ENCODE measurements at regions of chr5 and their contacts with region 1.

Region 1: GRCh38 chr5:72307968-72308852 is 11.8 kb downstream of the MRPS27 start:
- DNase-seq: peak; percentile 91 to 97 (median 95)
- ATAC-seq: peak; percentile 98
- H3K4me3 ChIP-seq: peak overlapping the region; percentile 93
- H3K4me3 Mint-ChIP-seq: peak overlapping the region; percentile 78 to 94 (median 92)
- H3K27ac ChIP-seq: peak overlapping the region; percentile 95
- H3K27ac Mint-ChIP-seq: peak overlapping the region; percentile 84 to 97 (median 91)
- H3K4me1 ChIP-seq: peaks cover 3 to 12% of the 10 kb centered on the region in 2 donors
- H3K4me1 Mint-ChIP-seq: peaks cover 9 to 38% (median 29%) of the 10 kb centered on the region in 7 donors
- H3K27me3 ChIP-seq: no peaks in the 10 kb centered on the region
- H3K27me3 Mint-ChIP-seq: no peaks in the 10 kb centered on the region

Region 2: DNA sequence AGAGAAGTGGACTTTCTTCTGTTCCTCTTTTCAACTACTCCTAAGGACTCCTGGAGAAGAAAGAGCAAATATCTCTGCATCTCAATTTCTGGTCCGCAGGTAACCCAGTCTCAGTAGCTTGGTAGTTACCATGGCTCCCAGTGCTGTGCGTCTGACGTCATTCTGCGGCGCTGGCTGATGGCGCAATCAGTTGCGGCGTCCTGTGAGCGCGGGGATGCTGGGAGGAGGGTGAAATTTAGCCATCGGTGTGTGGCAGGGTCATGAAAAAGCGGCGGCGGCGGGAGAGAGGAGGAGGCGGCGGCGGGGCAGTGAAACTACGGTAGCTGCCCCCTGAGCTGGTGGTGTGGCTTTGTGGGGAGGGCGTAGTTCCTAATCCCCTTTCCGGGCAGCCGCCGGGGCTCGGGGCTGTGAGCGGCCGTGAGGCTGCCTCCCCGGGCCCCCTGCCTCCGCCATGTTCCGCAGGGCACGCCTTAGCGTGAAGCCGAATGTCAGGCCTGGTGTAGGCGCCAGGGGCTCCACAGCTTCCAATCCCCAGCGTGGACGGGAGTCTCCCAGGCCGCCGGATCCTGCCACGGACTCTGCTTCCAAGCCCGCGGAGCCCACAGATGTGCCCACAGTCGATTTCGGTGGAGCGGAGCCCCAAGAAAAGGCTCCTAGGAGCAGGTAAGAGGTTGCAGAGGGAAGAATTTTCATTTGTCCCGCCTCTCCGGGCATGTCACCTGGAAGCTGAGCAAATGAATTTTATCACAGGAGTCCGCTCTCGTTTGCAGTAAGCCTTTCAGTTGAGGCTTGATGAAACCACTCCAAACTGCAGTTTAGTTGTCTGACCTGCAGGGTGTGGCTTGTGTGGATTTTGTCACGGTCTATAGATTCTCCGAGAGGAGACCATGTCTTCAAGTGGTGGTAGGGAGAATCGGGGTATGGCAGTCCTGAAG is 852.5 kb before region 1 on chr5 and contains the start of gene BDP1:
- CTCF ChIA-PET with region 1: no interaction called
- POLR2A ChIA-PET with region 1: no interaction called
- intact Hi-C with region 1: loop called (anchors 1 to 5 kb)
- DNase-seq: peak; percentile 94 to 99 (median 97)
- ATAC-seq: peak; percentile 92
- H3K4me3 ChIP-seq: peak within 1 kb of the TSS; percentile 99
- H3K4me3 Mint-ChIP-seq: peak within 1 kb of the TSS; percentile 90 to 100 (median 98)
- H3K27ac ChIP-seq: peak within 1 kb of the TSS; percentile 87
- H3K27ac Mint-ChIP-seq: peak within 1 kb of the TSS; percentile 93 to 100 (median 99)
- H3K4me1 ChIP-seq: peaks cover 11 to 12% of the 10 kb centered on the region in 2 donors
- H3K4me1 Mint-ChIP-seq: peaks cover 17 to 40% (median 34%) of the 10 kb centered on the region in 7 donors
- H3K27me3 ChIP-seq: no peaks in the 10 kb centered on the region
- H3K27me3 Mint-ChIP-seq: peaks cover 2 to 10% (median 7%) of the 10 kb centered on the region in 5 donors
- total RNA-seq, gene BDP1: 35.3 to 48.7 (median 38.1) TPM

Region 3: GRCh38 chr5:71573592-71573991 is 734.6 kb before region 1 on chr5:
- CTCF ChIA-PET with region 1: no interaction called
- POLR2A ChIA-PET with region 1: no interaction called
- intact Hi-C with region 1: no loop called
- DNase-seq: no peak
- ATAC-seq: no peak
- H3K4me3 ChIP-seq: no peak overlapping the region
- H3K4me3 Mint-ChIP-seq: no peak overlapping the region
- H3K27ac ChIP-seq: no peak overlapping the region
- H3K27ac Mint-ChIP-seq: no peak overlapping the region
- H3K4me1 ChIP-seq: no peaks in the 10 kb centered on the region
- H3K4me1 Mint-ChIP-seq: no peaks in the 10 kb centered on the region
- H3K27me3 ChIP-seq: no peaks in the 10 kb centered on the region
- H3K27me3 Mint-ChIP-seq: no peaks in the 10 kb centered on the region

Region 4: GRCh38 chr5:71767661-71768060 is 540.5 kb before region 1 on chr5:
- CTCF ChIA-PET with region 1: no interaction called
- POLR2A ChIA-PET with region 1: no interaction called
- intact Hi-C with region 1: loop called in 1 of 2 experiments (anchors 10 kb)
- DNase-seq: no peak
- ATAC-seq: no peak
- H3K4me3 ChIP-seq: no peak overlapping the region
- H3K4me3 Mint-ChIP-seq: no peak overlapping the region
- H3K27ac ChIP-seq: no peak overlapping the region
- H3K27ac Mint-ChIP-seq: no peak overlapping the region
- H3K4me1 ChIP-seq: no peaks in the 10 kb centered on the region
- H3K4me1 Mint-ChIP-seq: peaks cover 0 to 6% (median 1%) of the 10 kb centered on the region in 7 donors
- H3K27me3 ChIP-seq: no peaks in the 10 kb centered on the region
- H3K27me3 Mint-ChIP-seq: peaks cover 0 to 7% (median 6%) of the 10 kb centered on the region in 5 donors

Region 5: DNA sequence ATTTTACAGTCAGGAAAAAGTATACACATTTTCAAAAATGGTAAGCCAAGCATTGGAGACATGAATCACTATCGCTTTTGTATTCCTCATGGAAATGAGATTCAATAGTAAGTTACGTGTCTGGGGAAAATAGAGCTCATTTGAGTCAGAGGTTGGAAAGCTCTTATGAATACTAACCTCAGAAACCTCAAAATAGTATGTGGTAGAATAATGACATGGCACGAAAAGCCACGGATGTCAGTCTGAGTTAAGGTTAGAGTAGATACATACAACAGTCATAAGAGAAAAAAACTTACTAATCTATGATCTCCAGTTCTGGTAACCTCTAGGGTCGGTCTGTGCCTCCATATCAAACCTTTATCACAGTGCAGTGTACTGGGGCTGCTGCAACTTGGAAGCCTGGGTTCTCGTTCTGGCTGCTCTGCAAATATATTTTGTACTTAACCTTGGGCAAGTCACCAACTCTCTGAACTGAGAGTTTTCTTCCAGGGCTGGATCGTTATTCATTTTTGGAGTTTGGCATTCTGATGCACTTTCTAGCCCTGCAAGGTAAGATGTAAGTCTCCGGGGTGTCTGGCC is 169.2 kb before region 1 on chr5:
- CTCF ChIA-PET with region 1: interaction called, 3 read pairs
- POLR2A ChIA-PET with region 1: no interaction called
- intact Hi-C with region 1: loop called (anchors 1 kb)
- DNase-seq: no peak
- ATAC-seq: peak; percentile 66
- H3K4me3 ChIP-seq: no peak overlapping the region
- H3K4me3 Mint-ChIP-seq: no peak overlapping the region
- H3K27ac ChIP-seq: no peak overlapping the region
- H3K27ac Mint-ChIP-seq: no peak overlapping the region
- H3K4me1 ChIP-seq: no peaks in the 10 kb centered on the region
- H3K4me1 Mint-ChIP-seq: peaks cover 0 to 10% (median 4%) of the 10 kb centered on the region in 7 donors
- H3K27me3 ChIP-seq: no peaks in the 10 kb centered on the region
- H3K27me3 Mint-ChIP-seq: peaks cover 15 to 61% (median 40%) of the 10 kb centered on the region in 5 donors

Region 6: GRCh38 chr5:72319976-72320752 is 12.0 kb after region 1 on chr5 and contains the starts of genes MRPS27 and PTCD2:
- CTCF ChIA-PET with region 1: interaction called, 40 read pairs
- POLR2A ChIA-PET with region 1: interaction called, 39 read pairs
- intact Hi-C with region 1: loop called (anchors 1 kb)
- DNase-seq: peak; percentile 71 to 96 (median 94)
- ATAC-seq: peak; percentile 100
- H3K4me3 ChIP-seq: peak within 1 kb of the TSS; percentile 93
- H3K4me3 Mint-ChIP-seq: peak within 1 kb of the TSS; percentile 93 to 100 (median 98)
- H3K27ac ChIP-seq: peak within 1 kb of the TSS; percentile 89
- H3K27ac Mint-ChIP-seq: peak within 1 kb of the TSS; percentile 88 to 99 (median 95)
- H3K4me1 ChIP-seq: peaks cover 7 to 14% of the 10 kb centered on the region in 2 donors
- H3K4me1 Mint-ChIP-seq: peaks cover 24 to 65% (median 47%) of the 10 kb centered on the region in 7 donors
- H3K27me3 ChIP-seq: no peaks in the 10 kb centered on the region
- H3K27me3 Mint-ChIP-seq: no peaks in the 10 kb centered on the region
- total RNA-seq, gene MRPS27: 36.6 to 54.0 (median 39.5) TPM
- total RNA-seq, gene PTCD2: 5.0 to 12.6 (median 11.2) TPM

Region 7: GRCh38 chr5:72955768-72956323 is 647.6 kb after region 1 on chr5 and contains the start of gene FCHO2:
- CTCF ChIA-PET with region 1: no interaction called
- POLR2A ChIA-PET with region 1: no interaction called
- intact Hi-C with region 1: loop called in 1 of 2 experiments (anchors 5 kb)
- DNase-seq: peak; percentile 82 to 98 (median 91)
- ATAC-seq: peak; percentile 98
- H3K4me3 ChIP-seq: peak within 1 kb of the TSS; percentile 85
- H3K4me3 Mint-ChIP-seq: peak within 1 kb of the TSS; percentile 90 to 95 (median 94)
- H3K27ac ChIP-seq: no peak within 1 kb of the TSS
- H3K27ac Mint-ChIP-seq: peak within 1 kb of the TSS; percentile 22 to 92 (median 80)
- H3K4me1 ChIP-seq: peaks cover 5 to 12% of the 10 kb centered on the region in 2 donors
- H3K4me1 Mint-ChIP-seq: peaks cover 10 to 19% (median 13%) of the 10 kb centered on the region in 7 donors
- H3K27me3 ChIP-seq: peaks cover 3 to 4% of the 10 kb centered on the region in 2 donors
- H3K27me3 Mint-ChIP-seq: peaks cover 43 to 69% (median 55%) of the 10 kb centered on the region in 5 donors
- total RNA-seq, gene FCHO2: 1.7 to 7.1 (median 3.0) TPM